ENCODE measurements at regions of chr2 and their contacts with region 1.

Region 1: DNA sequence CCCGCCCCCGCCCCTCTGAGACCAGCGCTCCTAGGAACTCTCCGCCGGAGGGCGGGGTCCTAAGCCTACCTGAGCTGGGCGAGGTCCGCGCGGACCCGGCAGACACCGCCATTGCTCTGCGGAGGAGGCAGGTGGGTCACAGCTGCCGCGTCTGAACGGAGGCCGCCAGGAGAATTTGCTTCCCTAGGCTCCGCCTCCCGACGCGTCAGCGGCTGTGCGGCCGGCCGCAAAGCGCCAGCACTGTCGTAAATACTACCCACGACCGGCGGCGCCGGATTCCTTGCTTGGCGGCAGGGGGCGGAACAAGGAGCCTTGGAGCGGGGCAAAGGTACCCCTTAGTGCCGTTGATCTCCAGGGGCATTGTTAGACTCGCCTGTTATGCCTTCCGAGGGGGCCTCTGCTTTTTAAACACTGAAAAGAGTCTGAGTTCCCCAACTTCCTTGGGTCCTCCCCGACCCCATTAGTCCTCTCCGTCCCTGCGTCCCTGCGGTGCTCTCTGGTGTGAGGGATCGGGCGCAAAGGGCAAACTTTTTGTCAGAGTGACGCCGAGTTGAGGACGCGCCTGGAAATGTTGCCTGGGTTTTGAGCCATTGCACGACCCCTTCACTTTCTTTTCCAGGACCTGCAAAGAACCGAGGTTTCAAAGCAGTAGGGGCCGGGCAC is at the start of gene GGCX:
- DNase-seq: peak; percentile 93
- H3K4me3 Mint-ChIP-seq: peak within 1 kb of the TSS; percentile 97
- H3K27ac Mint-ChIP-seq: peak within 1 kb of the TSS; percentile 93
- H3K4me1 Mint-ChIP-seq: peaks cover 6% of the 10 kb centered on the region
- H3K27me3 Mint-ChIP-seq: no peaks in the 10 kb centered on the region
- CTCF ChIP-seq: no peak
- total RNA-seq, gene GGCX: 49.1 and 52.2 TPM in 2 replicates

Region 2: GRCh38 chr2:84946204-84947009 is 615.0 kb before region 1 on chr2:
- CTCF ChIA-PET with region 1: no interaction called
- POLR2A ChIA-PET with region 1: no interaction called
- intact Hi-C with region 1: no loop called
- DNase-seq: peak; percentile 85
- H3K4me3 Mint-ChIP-seq: peak overlapping the region; percentile 8
- H3K27ac Mint-ChIP-seq: peak overlapping the region; percentile 89
- H3K4me1 Mint-ChIP-seq: peaks cover 13% of the 10 kb centered on the region
- H3K27me3 Mint-ChIP-seq: no peaks in the 10 kb centered on the region
- CTCF ChIP-seq: no peak

Region 3: DNA sequence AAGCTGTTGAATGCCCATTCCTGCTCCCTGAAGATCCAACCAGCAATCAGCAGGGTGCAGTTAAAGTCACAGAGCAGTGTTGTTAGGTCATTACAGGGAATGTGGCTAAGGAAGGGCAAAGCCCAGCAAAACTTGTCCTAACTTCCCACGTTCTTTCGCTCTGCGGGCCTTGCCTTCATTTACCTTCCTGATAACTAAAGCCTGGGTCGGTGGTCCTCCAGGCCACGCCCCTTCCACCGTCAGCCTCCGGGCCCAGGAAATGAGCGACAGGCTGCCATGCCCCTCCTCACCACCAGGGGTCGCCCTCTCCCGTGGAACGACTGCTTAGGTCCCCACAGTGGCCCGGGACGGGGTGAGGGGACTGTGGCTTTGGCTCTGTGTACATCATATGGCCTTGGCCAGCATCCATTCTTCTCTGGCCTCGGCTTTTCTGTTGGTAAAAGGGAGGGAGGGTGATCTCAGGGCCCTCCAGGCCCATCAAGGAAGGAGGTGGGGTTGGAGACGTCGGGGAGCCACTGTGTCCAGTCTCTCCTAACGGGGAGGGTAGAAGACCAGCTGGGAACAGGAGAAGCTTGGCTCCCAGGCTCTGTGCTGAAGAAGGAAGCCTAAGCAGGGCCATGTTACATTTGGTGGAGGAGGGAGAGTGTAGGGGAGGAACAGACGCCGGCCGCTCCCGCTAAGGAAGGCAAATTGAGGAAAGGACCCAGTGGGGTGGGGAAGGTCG is 140.8 kb before region 1 on chr2:
- CTCF ChIA-PET with region 1: interaction called, 293 read pairs
- POLR2A ChIA-PET with region 1: interaction called, 9 read pairs
- intact Hi-C with region 1: no loop called
- DNase-seq: peak; percentile 83
- H3K4me3 Mint-ChIP-seq: peak overlapping the region; percentile 24
- H3K27ac Mint-ChIP-seq: peak overlapping the region; percentile 92
- H3K4me1 Mint-ChIP-seq: peaks cover 30% of the 10 kb centered on the region
- H3K27me3 Mint-ChIP-seq: no peaks in the 10 kb centered on the region
- CTCF ChIP-seq: peak; percentile 99

Region 4: DNA sequence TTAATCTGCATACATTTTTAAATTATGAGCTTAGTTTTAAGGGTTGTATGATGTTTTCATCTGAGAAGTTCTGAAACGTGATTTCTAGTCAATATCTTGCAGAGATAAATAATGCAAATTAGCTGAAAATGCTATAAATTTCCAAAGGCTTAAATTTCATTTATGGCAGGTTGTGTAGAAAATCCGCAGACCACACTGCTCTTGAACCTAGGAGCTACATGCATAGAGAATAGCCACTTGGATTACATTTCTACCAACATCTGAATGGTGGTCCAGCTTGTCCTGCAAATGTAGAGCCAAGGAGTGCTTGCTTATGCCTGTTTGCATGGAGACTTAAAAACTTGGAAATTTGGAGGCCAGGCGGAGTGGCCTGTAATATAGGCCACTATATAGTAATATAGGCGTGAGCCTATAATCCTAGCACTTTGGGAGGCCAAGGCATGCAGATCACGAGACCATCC is 15.6 kb before region 1 on chr2:
- CTCF ChIA-PET with region 1: interaction called, 20 read pairs
- POLR2A ChIA-PET with region 1: interaction called, 21 read pairs
- intact Hi-C with region 1: no loop called
- DNase-seq: no peak
- H3K4me3 Mint-ChIP-seq: no peak overlapping the region
- H3K27ac Mint-ChIP-seq: no peak overlapping the region
- H3K4me1 Mint-ChIP-seq: peaks cover 37% of the 10 kb centered on the region
- H3K27me3 Mint-ChIP-seq: no peaks in the 10 kb centered on the region
- CTCF ChIP-seq: no peak

Region 5: GRCh38 chr2:85602476-85603234 is 41.2 kb after region 1 on chr2 and contains the start of gene TMEM150A:
- CTCF ChIA-PET with region 1: interaction called, 5 read pairs
- POLR2A ChIA-PET with region 1: interaction called, 7 read pairs
- intact Hi-C with region 1: loop called (anchors 5 kb)
- DNase-seq: peak; percentile 90
- H3K4me3 Mint-ChIP-seq: peak within 1 kb of the TSS; percentile 79
- H3K27ac Mint-ChIP-seq: peak within 1 kb of the TSS; percentile 70
- H3K4me1 Mint-ChIP-seq: peaks cover 12% of the 10 kb centered on the region
- H3K27me3 Mint-ChIP-seq: no peaks in the 10 kb centered on the region
- CTCF ChIP-seq: peak; percentile 30
- total RNA-seq, gene TMEM150A: 12.5 and 14.5 TPM in 2 replicates

Region 6: DNA sequence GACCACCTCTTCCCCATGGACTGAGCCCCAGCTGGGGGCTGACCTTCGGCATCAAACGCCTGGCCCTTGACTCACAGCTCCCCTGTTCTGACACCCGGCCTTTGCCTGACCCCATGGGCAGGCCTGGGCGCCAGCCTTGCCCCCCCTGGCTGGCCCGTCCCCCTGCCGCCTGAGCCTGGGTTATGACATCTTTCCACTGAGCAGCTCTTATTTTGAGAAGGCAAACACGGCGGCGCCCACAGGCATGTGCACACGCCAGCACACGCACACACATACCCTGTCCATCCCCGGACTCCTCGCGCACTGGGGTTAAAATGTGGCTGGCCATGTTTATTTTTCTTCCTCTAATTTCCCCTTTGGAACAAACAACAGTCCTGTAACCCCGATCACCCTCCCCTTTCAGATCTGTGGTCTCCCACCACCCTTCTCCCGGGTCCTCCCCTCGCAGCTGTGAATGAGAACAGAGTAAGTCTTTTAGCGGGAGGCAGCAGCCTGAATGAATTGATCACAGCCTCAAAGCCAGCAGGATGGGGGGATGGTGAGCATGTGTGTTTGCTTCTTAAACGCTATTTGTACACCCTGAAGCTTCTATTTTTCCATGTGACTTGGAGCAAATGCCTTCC is 180.5 kb after region 1 on chr2:
- CTCF ChIA-PET with region 1: no interaction called
- POLR2A ChIA-PET with region 1: no interaction called
- intact Hi-C with region 1: no loop called
- DNase-seq: peak; percentile 58
- H3K4me3 Mint-ChIP-seq: peak overlapping the region; percentile 11
- H3K27ac Mint-ChIP-seq: peak overlapping the region; percentile 91
- H3K4me1 Mint-ChIP-seq: peaks cover 29% of the 10 kb centered on the region
- H3K27me3 Mint-ChIP-seq: peaks cover 19% of the 10 kb centered on the region
- CTCF ChIP-seq: no peak